ENCODE measurements at regions of chrX and their contacts with region 1.

Region 1: GRCh38 chrX:12814420-12814819 is 23.2 kb downstream of the PRPS2 start:
- DNase-seq: no peak
- ATAC-seq: peak; percentile 49
- H3K4me3 ChIP-seq: no peak overlapping the region
- H3K27ac ChIP-seq: no peak overlapping the region
- H3K4me1 ChIP-seq: no peaks in the 10 kb centered on the region
- H3K27me3 ChIP-seq: no peaks in the 10 kb centered on the region
- CTCF ChIP-seq: peak; percentile 34 to 48 (median 35); a peak in 4 of 6 replicates
- POLR2A ChIP-seq: no peak
- RAD21 ChIP-seq: peak; percentile 62

Region 2: GRCh38 chrX:12894074-12895030 is 79.9 kb after region 1 on chrX:
- CTCF ChIA-PET with region 1: interaction called, 10 read pairs
- POLR2A ChIA-PET with region 1: no interaction called
- RAD21 ChIA-PET with region 1: no interaction called
- intact Hi-C with region 1: loop called (anchors 1 kb)
- DNase-seq: peak; percentile 21
- ATAC-seq: peak; percentile 73
- H3K4me3 ChIP-seq: no peak overlapping the region
- H3K27ac ChIP-seq: no peak overlapping the region
- H3K4me1 ChIP-seq: no peaks in the 10 kb centered on the region
- H3K27me3 ChIP-seq: no peaks in the 10 kb centered on the region
- CTCF ChIP-seq: peak; percentile 37 to 72 (median 66); a peak in 5 of 6 replicates
- POLR2A ChIP-seq: no peak
- RAD21 ChIP-seq: peak; percentile 61

Region 3: GRCh38 chrX:12901486-12901885 is 87.1 kb after region 1 on chrX:
- CTCF ChIA-PET with region 1: interaction called, 17 read pairs
- POLR2A ChIA-PET with region 1: no interaction called
- RAD21 ChIA-PET with region 1: no interaction called
- intact Hi-C with region 1: no loop called
- DNase-seq: peak; percentile 36
- ATAC-seq: peak; percentile 83
- H3K4me3 ChIP-seq: no peak overlapping the region
- H3K27ac ChIP-seq: no peak overlapping the region
- H3K4me1 ChIP-seq: no peaks in the 10 kb centered on the region
- H3K27me3 ChIP-seq: no peaks in the 10 kb centered on the region
- CTCF ChIP-seq: peak; percentile 39 to 49 (median 44); a peak in 4 of 6 replicates
- POLR2A ChIP-seq: no peak
- RAD21 ChIP-seq: peak; percentile 57

Measured in HCT116 (cell line).